Transverse colon (tissue), 4 donors: ENCODE measurements at regions of chr10 and their contacts with region 1.

Region 1: DNA sequence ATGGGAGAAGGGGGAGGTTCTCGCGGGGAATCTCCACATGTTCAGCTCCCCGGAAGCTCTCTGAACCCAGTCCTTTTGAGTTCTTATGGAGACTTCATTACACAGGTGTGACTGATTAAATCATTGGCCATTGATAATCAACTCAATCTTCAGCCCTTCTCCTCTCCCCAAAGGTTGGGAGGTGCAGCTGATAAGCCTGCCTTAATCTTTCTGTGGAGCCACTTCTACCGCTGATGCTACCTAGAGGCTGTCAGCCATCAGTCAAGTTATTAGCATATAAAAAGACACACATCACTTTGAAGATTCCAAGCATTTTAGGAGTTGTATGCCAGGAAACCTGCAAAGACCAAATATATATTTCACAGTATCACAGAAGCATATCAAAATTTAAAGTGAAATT is 91.7 kb downstream of the MARCHF5 start:
- DNase-seq: no peak
- H3K4me3 ChIP-seq: no peak overlapping the region
- H3K27ac ChIP-seq: no peak overlapping the region
- H3K4me1 ChIP-seq: no peaks in the 10 kb centered on the region
- H3K27me3 ChIP-seq: no peaks in the 10 kb centered on the region
- CTCF ChIP-seq: no peak
- EP300 ChIP-seq: no peak
- POLR2A ChIP-seq: no peak

Region 2: DNA sequence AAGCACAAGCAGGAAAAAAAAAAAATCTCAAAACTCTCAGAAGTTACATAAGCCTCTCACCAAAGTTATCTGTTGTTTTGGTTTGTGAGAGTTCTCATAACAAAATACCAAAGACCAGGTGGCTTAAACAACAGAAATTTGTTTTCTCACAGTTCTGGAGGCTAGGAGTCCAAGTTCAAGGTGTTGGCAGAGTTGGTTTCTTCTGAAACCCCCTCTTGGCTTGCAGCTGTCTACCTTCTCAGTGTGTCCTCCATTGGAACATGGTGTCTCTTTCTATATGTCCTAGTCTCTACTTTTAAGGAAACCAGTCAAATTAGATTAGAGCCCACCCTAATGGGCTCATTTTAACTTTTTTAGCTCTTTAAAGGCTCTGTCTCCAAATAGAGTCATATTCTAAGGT is 539.5 kb before region 1 on chr10:
- in situ Hi-C with region 1: no loop called
- intact Hi-C with region 1: no loop called
- DNase-seq: no peak
- H3K4me3 ChIP-seq: no peak overlapping the region
- H3K27ac ChIP-seq: no peak overlapping the region
- H3K4me1 ChIP-seq: no peaks in the 10 kb centered on the region
- H3K27me3 ChIP-seq: no peaks in the 10 kb centered on the region
- CTCF ChIP-seq: no peak
- EP300 ChIP-seq: no peak
- POLR2A ChIP-seq: no peak

Region 3: DNA sequence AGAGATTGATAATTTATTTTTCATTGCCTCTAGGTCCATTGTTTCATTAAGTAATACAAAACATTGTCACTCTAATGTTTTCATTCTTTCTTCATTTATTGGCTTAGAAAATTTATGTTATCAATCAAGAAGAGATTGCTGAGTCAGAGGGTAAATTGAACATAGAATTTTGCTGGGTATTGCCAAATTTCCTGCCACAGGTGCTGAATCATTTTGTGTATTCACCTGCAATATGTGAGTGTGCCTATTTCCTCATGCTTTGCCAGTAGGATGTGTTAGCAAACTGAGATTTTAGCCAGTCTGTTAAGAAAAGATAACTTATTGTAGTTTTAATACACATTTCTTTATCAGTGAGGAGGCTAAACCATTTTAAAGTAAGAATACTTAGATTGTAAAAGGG is 53.6 kb before region 1 on chr10:
- in situ Hi-C with region 1: no loop called
- intact Hi-C with region 1: loop called (anchors 1 kb)
- DNase-seq: no peak
- H3K4me3 ChIP-seq: no peak overlapping the region
- H3K27ac ChIP-seq: no peak overlapping the region
- H3K4me1 ChIP-seq: peaks cover 3 to 38% (median 26%) of the 10 kb centered on the region in 4 donors
- H3K27me3 ChIP-seq: no peaks in the 10 kb centered on the region
- CTCF ChIP-seq: no peak
- EP300 ChIP-seq: no peak
- POLR2A ChIP-seq: no peak

Region 4: GRCh38 chr10:92470041-92470440 is 87.4 kb after region 1 on chr10:
- in situ Hi-C with region 1: no loop called
- intact Hi-C with region 1: no loop called
- DNase-seq: no peak
- H3K4me3 ChIP-seq: no peak overlapping the region
- H3K27ac ChIP-seq: no peak overlapping the region
- H3K4me1 ChIP-seq: no peaks in the 10 kb centered on the region
- H3K27me3 ChIP-seq: no peaks in the 10 kb centered on the region
- CTCF ChIP-seq: no peak
- EP300 ChIP-seq: no peak
- POLR2A ChIP-seq: no peak